Mucosa of descending colon (tissue), 3 donors: ENCODE measurements at regions of chr12 and their contacts with region 1.

Region 1: GRCh38 chr12:25950329-25951115 is 8.0 kb upstream of the RASSF8 start:
- DNase-seq: no peak
- ATAC-seq: no peak
- H3K4me3 ChIP-seq: no peak overlapping the region
- H3K4me1 ChIP-seq: no peaks in the 10 kb centered on the region
- CTCF ChIP-seq: no peak

Region 2: GRCh38 chr12:25566202-25566949 is 384.1 kb before region 1 on chr12:
- intact Hi-C with region 1: loop called in 1 of 2 experiments (anchors 2 kb)
- DNase-seq: no peak
- ATAC-seq: no peak
- H3K4me3 ChIP-seq: no peak overlapping the region
- H3K4me1 ChIP-seq: no peaks in the 10 kb centered on the region
- CTCF ChIP-seq: no peak